ENCODE measurements at regions of chr2 and their contacts with region 1.

Region 1: GRCh38 chr2:174176898-174177297 is 71.4 kb downstream of the OLA1 start:
- DNase-seq: no peak
- H3K4me3 ChIP-seq: no peak overlapping the region
- H3K27me3 ChIP-seq: no peaks in the 10 kb centered on the region
- CTCF ChIP-seq: no peak

Region 2: GRCh38 chr2:174059178-174059874 is 117.6 kb before region 1 on chr2:
- CTCF ChIA-PET with region 1: no interaction called
- POLR2A ChIA-PET with region 1: interaction called, 10 read pairs
- DNase-seq: peak; percentile 72
- H3K4me3 ChIP-seq: no peak overlapping the region
- H3K27me3 ChIP-seq: no peaks in the 10 kb centered on the region
- CTCF ChIP-seq: no peak

Region 3: GRCh38 chr2:174446531-174446930 is 269.6 kb after region 1 on chr2:
- CTCF ChIA-PET with region 1: no interaction called
- POLR2A ChIA-PET with region 1: interaction called, 10 read pairs
- DNase-seq: no peak
- H3K4me3 ChIP-seq: no peak overlapping the region
- H3K27me3 ChIP-seq: no peaks in the 10 kb centered on the region
- CTCF ChIP-seq: no peak

Measured in BJ (cell line).